ENCODE measurements at regions of chr1 and their contacts with region 1.

Region 1: DNA sequence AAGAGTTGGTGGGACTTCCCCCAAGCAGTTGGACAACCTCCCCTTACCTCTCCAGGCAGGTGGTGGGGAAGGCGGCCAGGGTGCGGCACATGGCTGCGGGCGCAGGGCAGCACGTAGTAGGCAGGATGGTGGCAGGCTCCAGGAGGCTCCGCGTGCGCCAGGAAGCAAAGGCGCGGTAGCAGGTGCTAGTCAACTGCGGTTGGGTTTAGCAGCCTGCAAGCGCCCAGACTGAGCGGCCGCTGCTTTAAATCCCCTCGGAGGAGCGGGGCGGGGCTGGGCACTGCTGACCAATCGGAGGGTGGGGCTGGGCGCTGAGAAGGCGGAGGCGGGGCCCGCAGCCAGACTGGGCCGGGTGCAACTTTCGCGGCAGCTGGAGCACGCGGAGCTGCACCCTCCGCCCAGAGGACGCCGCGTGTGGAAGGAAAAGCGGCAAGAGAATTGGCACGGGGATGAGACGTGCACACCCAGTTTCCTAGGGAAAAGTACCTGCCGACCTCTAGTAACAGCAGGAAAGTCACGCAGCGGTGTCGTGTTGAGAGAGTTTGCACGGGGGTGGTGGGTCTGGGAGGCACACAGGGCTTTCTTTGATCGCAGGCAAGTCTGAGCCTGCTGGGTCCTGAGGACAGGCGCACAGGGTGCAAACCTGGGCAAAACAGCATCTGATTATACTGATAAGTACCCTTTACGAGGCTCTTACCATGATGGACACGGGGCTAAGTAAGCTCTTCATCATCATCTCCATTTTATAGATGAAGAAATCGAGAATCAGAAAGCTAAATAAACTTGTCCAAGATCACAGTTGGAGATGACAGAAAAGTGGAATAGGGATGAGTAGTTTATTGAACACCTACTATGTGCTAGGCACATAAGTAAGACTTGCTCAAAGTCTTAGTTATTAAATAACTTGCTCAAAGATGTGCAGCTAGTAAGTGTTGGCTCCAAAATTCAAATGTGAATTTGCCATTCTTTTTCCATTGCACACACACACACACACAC is at the start of gene RGS16:
- DNase-seq: peak; percentile 69 to 95 (median 76)
- ATAC-seq: peak; percentile 93
- H3K4me3 ChIP-seq: peak within 1 kb of the TSS; percentile 59
- H3K4me3 Mint-ChIP-seq: peak within 1 kb of the TSS in 8 of 10 donors; percentile 6 to 87 (median 82)
- H3K27ac ChIP-seq: peak within 1 kb of the TSS; percentile 37
- H3K27ac Mint-ChIP-seq: peak within 1 kb of the TSS in 6 of 9 donors; percentile 13 to 84 (median 71)
- H3K4me1 ChIP-seq: peaks cover 13 to 26% of the 10 kb centered on the region in 2 donors
- H3K4me1 Mint-ChIP-seq: peaks cover 4 to 37% (median 18%) of the 10 kb centered on the region in 7 donors
- H3K27me3 ChIP-seq: no peaks in the 10 kb centered on the region
- H3K27me3 Mint-ChIP-seq: peaks cover 0 to 12% (median 7%) of the 10 kb centered on the region in 5 donors
- total RNA-seq, gene RGS16: 0.49 to 17.5 (median 3.4) TPM

Region 2: GRCh38 chr1:181105134-181106021 is 1499.1 kb before region 1 on chr1:
- CTCF ChIA-PET with region 1: no interaction called
- POLR2A ChIA-PET with region 1: no interaction called
- intact Hi-C with region 1: loop called in 1 of 2 experiments (anchors 10 kb)
- DNase-seq: peak; percentile 81 to 94 (median 90)
- ATAC-seq: peak; percentile 94
- H3K4me3 ChIP-seq: peak overlapping the region; percentile 61
- H3K4me3 Mint-ChIP-seq: peak overlapping the region; percentile 84 to 96 (median 91)
- H3K27ac ChIP-seq: peak overlapping the region; percentile 85
- H3K27ac Mint-ChIP-seq: peak overlapping the region; percentile 69 to 97 (median 89)
- H3K4me1 ChIP-seq: peaks cover 16 to 20% of the 10 kb centered on the region in 2 donors
- H3K4me1 Mint-ChIP-seq: peaks cover 22 to 76% (median 61%) of the 10 kb centered on the region in 7 donors
- H3K27me3 ChIP-seq: no peaks in the 10 kb centered on the region
- H3K27me3 Mint-ChIP-seq: peaks cover 0 to 43% (median 0%) of the 10 kb centered on the region in 5 donors

Region 3: GRCh38 chr1:182391362-182392044 is 213.0 kb before region 1 on chr1 and contains the start of gene GLUL:
- CTCF ChIA-PET with region 1: no interaction called
- POLR2A ChIA-PET with region 1: interaction called, 3 read pairs
- intact Hi-C with region 1: loop called (anchors 5 kb)
- DNase-seq: peak; percentile 46 to 83 (median 63)
- ATAC-seq: peak; percentile 87
- H3K4me3 ChIP-seq: peak within 1 kb of the TSS; percentile 73
- H3K4me3 Mint-ChIP-seq: peak within 1 kb of the TSS; percentile 87 to 98 (median 94)
- H3K27ac ChIP-seq: peak within 1 kb of the TSS; percentile 64
- H3K27ac Mint-ChIP-seq: peak within 1 kb of the TSS; percentile 82 to 97 (median 89)
- H3K4me1 ChIP-seq: peaks cover 10 to 14% of the 10 kb centered on the region in 2 donors
- H3K4me1 Mint-ChIP-seq: peaks cover 17 to 45% (median 29%) of the 10 kb centered on the region in 7 donors
- H3K27me3 ChIP-seq: no peaks in the 10 kb centered on the region
- H3K27me3 Mint-ChIP-seq: peaks cover 0 to 25% (median 0%) of the 10 kb centered on the region in 5 donors
- total RNA-seq, gene GLUL: 66.2 to 357 (median 112) TPM

Region 4: GRCh38 chr1:182404781-182405180 is 199.7 kb before region 1 on chr1:
- CTCF ChIA-PET with region 1: no interaction called
- POLR2A ChIA-PET with region 1: no interaction called
- intact Hi-C with region 1: no loop called
- DNase-seq: no peak
- ATAC-seq: no peak
- H3K4me3 ChIP-seq: no peak overlapping the region
- H3K4me3 Mint-ChIP-seq: no peak overlapping the region
- H3K27ac ChIP-seq: no peak overlapping the region
- H3K27ac Mint-ChIP-seq: no peak overlapping the region
- H3K4me1 ChIP-seq: no peaks in the 10 kb centered on the region
- H3K4me1 Mint-ChIP-seq: no peaks in the 10 kb centered on the region
- H3K27me3 ChIP-seq: no peaks in the 10 kb centered on the region
- H3K27me3 Mint-ChIP-seq: peaks cover 7 to 49% (median 22%) of the 10 kb centered on the region in 5 donors

Region 5: DNA sequence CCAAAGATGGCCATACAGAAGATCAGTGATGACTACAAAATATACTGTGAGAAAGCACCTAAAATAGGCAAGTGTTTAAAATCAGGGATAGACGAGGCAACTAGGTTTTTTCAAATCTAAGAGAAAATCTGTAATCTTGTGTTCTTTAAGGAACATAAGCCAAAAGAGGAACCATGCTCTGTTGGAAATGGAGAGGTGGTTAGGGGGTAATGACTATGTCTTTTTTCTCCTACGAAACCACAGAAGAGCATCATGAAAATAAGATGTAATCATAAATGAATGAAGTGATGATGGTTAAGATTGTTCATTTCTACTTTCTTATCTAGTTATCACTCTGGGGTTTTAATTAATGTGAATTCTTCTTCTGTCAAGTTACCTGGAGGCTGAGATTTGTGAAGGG is 111.4 kb before region 1 on chr1:
- CTCF ChIA-PET with region 1: no interaction called
- POLR2A ChIA-PET with region 1: no interaction called
- intact Hi-C with region 1: no loop called
- DNase-seq: no peak
- ATAC-seq: peak; percentile 64
- H3K4me3 ChIP-seq: no peak overlapping the region
- H3K4me3 Mint-ChIP-seq: no peak overlapping the region
- H3K27ac ChIP-seq: no peak overlapping the region
- H3K27ac Mint-ChIP-seq: no peak overlapping the region
- H3K4me1 ChIP-seq: no peaks in the 10 kb centered on the region
- H3K4me1 Mint-ChIP-seq: peaks cover 0 to 2% (median 0%) of the 10 kb centered on the region in 7 donors
- H3K27me3 ChIP-seq: no peaks in the 10 kb centered on the region
- H3K27me3 Mint-ChIP-seq: peaks cover 0 to 5% (median 3%) of the 10 kb centered on the region in 5 donors

Region 6: GRCh38 chr1:182588500-182589452 is 15.7 kb before region 1 on chr1 and contains the start of gene RNASEL:
- CTCF ChIA-PET with region 1: interaction called, 43 read pairs
- POLR2A ChIA-PET with region 1: interaction called, 7 read pairs
- intact Hi-C with region 1: loop called (anchors 1 kb)
- DNase-seq: peak; percentile 24 to 72 (median 65)
- ATAC-seq: peak; percentile 89
- H3K4me3 ChIP-seq: peak within 1 kb of the TSS; percentile 92
- H3K4me3 Mint-ChIP-seq: peak within 1 kb of the TSS; percentile 93 to 99 (median 98)
- H3K27ac ChIP-seq: peak within 1 kb of the TSS; percentile 97
- H3K27ac Mint-ChIP-seq: peak within 1 kb of the TSS; percentile 97 to 100 (median 99)
- H3K4me1 ChIP-seq: peaks cover 23 to 27% of the 10 kb centered on the region in 2 donors
- H3K4me1 Mint-ChIP-seq: peaks cover 31 to 60% (median 51%) of the 10 kb centered on the region in 7 donors
- H3K27me3 ChIP-seq: no peaks in the 10 kb centered on the region
- H3K27me3 Mint-ChIP-seq: peaks cover 0 to 9% (median 0%) of the 10 kb centered on the region in 5 donors
- total RNA-seq, gene RNASEL: 5.7 to 34.9 (median 12.1) TPM

Region 7: GRCh38 chr1:182677397-182678098 is 73.1 kb after region 1 on chr1:
- CTCF ChIA-PET with region 1: interaction called, 3 read pairs
- POLR2A ChIA-PET with region 1: no interaction called
- intact Hi-C with region 1: loop called in 1 of 2 experiments (anchors 5 kb)
- DNase-seq: no peak
- ATAC-seq: no peak
- H3K4me3 ChIP-seq: no peak overlapping the region
- H3K4me3 Mint-ChIP-seq: no peak overlapping the region
- H3K27ac ChIP-seq: no peak overlapping the region
- H3K27ac Mint-ChIP-seq: no peak overlapping the region
- H3K4me1 ChIP-seq: no peaks in the 10 kb centered on the region
- H3K4me1 Mint-ChIP-seq: peaks cover 0 to 11% (median 0%) of the 10 kb centered on the region in 7 donors
- H3K27me3 ChIP-seq: no peaks in the 10 kb centered on the region
- H3K27me3 Mint-ChIP-seq: peaks cover 0 to 24% (median 3%) of the 10 kb centered on the region in 5 donors

Region 8: DNA sequence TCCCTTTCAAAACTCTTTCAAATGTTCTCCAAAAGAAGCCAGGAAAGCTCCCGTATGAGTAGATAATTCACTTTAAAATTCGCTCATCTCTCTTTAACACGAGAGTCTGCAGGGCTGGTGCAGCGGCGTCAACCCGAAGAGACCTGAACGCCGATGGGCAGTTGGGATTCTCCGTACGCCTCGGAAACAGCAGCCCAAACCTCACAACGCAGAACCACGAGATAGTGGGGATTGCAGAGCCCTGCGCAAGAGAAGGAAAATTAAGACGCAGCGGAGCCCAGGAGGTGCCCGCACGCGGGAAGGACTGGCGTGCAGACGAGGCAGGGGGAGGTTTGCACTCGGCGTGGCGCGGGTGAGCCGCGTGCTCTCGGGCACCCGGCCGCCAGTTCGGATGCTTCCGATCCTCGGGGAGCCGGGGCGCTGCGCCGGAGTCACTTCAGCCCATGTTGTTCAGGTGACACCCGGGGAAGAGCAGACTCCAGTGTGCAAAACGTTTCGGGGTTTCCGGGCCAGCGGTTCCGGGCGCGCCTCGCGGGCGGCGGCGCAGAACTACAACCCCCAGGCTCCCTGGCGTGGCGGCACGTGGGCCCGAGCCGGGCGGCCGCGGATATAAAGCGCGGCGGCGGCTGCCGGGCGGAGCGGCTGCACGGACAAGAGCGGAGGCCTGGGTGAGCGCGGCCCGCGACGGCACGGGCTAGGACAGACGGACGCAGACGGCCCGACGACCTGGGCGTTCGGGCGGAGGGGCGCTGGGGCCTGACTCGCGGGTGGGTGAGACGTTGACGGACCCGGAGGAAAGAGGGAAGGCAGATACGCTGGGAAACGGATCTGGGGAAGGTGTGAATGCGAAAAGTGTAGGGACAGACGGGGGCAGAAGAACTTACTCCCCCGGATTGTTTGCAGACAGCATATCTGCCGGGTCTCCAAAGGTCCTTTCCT is 184.9 kb after region 1 on chr1 and contains the start of gene NPL:
- CTCF ChIA-PET with region 1: interaction called, 403 read pairs
- POLR2A ChIA-PET with region 1: interaction called, 9 read pairs
- intact Hi-C with region 1: loop called in 1 of 2 experiments (anchors 1 kb)
- DNase-seq: peak; percentile 78 to 88 (median 86)
- ATAC-seq: peak; percentile 97
- H3K4me3 ChIP-seq: peak within 1 kb of the TSS; percentile 94
- H3K4me3 Mint-ChIP-seq: peak within 1 kb of the TSS; percentile 88 to 96 (median 94)
- H3K27ac ChIP-seq: peak within 1 kb of the TSS; percentile 68
- H3K27ac Mint-ChIP-seq: peak within 1 kb of the TSS; percentile 45 to 94 (median 87)
- H3K4me1 ChIP-seq: peaks cover 8 to 13% of the 10 kb centered on the region in 2 donors
- H3K4me1 Mint-ChIP-seq: peaks cover 8 to 18% (median 15%) of the 10 kb centered on the region in 7 donors
- H3K27me3 ChIP-seq: no peaks in the 10 kb centered on the region
- H3K27me3 Mint-ChIP-seq: peaks cover 0 to 38% (median 0%) of the 10 kb centered on the region in 5 donors
- total RNA-seq, gene NPL: 3.0 to 20.8 (median 9.9) TPM

Measured in naive thymus-derived CD4-positive, alpha-beta T cell (primary cell).